Common myeloid progenitor, CD34-positive (primary cell): ENCODE measurements at regions of chr14 and their contacts with region 1.

Region 1: GRCh38 chr14:63276492-63277342 is 42.0 kb downstream of the GPHB5 start:
- DNase-seq: peak; percentile 14 to 51 (median 51)
- H3K4me3 ChIP-seq: no peak overlapping the region
- H3K27ac ChIP-seq: no peak overlapping the region
- H3K4me1 ChIP-seq: no peaks in the 10 kb centered on the region
- H3K27me3 ChIP-seq: peaks cover 0 to 2% (median 0%) of the 10 kb centered on the region in 5 experiments

Region 2: GRCh38 chr14:62179367-62180018 is 1097.2 kb before region 1 on chr14:
- CTCF ChIA-PET with region 1: interaction called, 21 read pairs
- POLR2A ChIA-PET with region 1: no interaction called
- DNase-seq: peak; percentile 14 to 52 (median 47)
- H3K4me3 ChIP-seq: no peak overlapping the region
- H3K27ac ChIP-seq: no peak overlapping the region
- H3K4me1 ChIP-seq: no peaks in the 10 kb centered on the region
- H3K27me3 ChIP-seq: peaks cover 0 to 7% (median 3%) of the 10 kb centered on the region in 5 experiments

Region 3: DNA sequence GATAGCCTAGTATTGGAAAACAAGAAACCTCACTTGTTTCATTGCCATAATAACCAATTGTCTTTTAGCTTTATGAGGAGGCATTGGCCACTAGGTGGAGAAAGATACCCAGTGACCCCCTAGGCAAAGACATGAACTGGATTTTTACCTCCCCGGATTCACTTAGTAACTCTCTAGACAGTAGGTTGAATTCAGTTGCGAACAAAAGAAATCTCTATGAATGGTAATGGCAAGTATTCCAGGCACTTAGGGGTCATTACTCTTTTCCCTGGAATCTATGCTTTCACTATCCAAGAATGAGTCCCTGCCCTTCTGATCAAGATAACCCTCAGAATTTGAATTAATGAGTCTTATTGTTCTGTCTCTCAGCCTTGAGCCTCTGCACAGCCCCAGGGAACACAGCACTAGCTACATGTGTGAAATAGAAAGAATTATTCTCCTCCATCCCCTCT is 101.9 kb before region 1 on chr14:
- CTCF ChIA-PET with region 1: interaction called, 28 read pairs
- POLR2A ChIA-PET with region 1: no interaction called
- DNase-seq: peak; percentile 7 to 38 (median 20)
- H3K4me3 ChIP-seq: no peak overlapping the region
- H3K27ac ChIP-seq: no peak overlapping the region
- H3K4me1 ChIP-seq: no peaks in the 10 kb centered on the region
- H3K27me3 ChIP-seq: peaks cover 0 to 16% (median 4%) of the 10 kb centered on the region in 5 experiments

Region 4: DNA sequence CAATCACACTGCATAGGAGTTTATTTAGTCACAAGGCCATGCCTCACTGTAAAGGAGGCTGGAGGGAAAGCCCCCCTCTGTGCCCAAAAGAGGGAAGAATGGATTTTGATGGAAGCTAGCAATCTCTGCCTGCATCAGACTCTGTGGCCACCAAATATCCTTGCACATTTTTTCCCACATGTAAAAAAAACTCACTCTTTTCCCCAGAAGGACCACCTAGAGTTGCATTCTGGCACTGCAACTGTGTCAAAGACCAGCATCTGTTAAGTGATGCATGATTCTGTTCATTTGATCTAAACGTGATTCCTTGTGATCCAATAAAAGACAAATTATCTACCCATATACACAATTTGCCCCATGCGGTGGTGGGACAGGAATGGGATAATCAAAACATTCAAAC is 64.5 kb before region 1 on chr14:
- CTCF ChIA-PET with region 1: no interaction called
- POLR2A ChIA-PET with region 1: no interaction called
- DNase-seq: no peak
- H3K4me3 ChIP-seq: no peak overlapping the region
- H3K27ac ChIP-seq: no peak overlapping the region
- H3K4me1 ChIP-seq: no peaks in the 10 kb centered on the region
- H3K27me3 ChIP-seq: peaks cover 0 to 2% (median 0%) of the 10 kb centered on the region in 5 experiments